Right ventricle myocardium inferior (tissue), 1 donor: ENCODE measurements at regions of chr5 and their contacts with region 1.

Region 1: DNA sequence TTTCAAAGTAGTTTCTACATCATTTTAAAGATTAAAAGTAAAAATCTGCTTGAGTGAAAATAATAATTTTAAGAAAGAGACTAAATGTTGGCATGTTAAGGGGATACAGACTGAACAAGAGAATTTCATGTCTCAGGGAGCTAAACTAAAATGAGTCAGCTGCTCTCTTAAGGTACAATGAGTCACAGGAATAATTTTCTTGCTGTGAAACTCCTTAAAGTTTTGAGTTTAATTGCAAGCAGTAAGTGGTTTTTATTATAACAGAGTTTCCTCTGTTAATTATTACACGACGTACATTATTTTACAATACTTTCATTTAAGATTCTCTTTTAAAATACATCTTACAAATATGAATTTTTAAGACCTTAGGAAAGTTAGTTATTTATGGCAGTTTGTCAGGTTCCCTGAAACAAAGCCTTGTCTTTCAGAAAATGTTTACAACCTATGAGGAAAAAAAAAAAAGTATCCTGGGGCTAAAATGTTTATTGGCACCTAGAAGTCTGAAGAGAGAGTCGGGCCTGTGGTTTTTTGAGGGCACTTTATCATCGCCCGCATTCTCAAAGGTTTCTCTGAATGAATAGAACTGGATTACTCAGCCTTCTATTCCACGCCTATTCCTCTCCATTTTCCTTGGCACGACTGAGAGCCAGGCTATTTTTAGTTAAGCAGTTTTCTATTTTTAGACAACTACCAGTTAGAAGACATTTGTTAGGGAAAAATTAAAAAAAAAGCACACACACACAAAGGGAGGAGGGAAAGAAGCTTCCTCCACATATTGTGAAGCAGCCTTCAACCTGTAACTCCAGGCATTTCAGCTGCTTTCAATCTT is 97.4 kb downstream of the MEF2C start:
- DNase-seq: no peak
- ATAC-seq: peak; percentile 91

Region 2: DNA sequence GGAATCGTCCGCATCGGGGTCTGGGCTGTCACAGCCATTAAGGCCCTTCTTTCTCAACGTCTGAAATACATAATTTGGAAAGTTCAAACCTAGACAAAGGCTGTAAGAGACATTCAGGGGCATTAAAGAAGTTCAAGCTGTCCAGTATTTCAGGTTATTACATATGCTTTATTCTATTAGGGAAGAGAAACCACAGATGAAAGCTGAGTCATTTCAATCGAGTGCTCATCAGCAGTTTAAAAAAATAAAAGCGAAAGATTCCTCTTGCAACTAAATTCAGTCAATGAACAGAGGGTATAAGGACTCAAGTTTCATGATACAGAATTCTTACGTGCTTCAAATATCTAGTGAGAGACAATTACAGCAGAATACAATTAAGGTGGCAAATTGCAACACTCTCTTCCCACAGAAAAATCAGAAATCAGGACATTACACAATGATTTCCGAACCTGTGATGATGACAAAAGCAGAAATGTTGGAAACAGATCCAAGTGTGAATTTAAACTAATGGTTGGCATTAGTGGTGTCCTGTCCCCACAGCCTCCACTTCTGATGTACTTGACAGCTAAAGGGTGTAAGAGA is 24.2 kb before region 1 on chr5:
- intact Hi-C with region 1: loop called (anchors 2 kb)
- DNase-seq: no peak
- ATAC-seq: no peak

Region 3: GRCh38 chr5:88883059-88883835 is 97.6 kb after region 1 on chr5 and contains the start of gene MEF2C:
- intact Hi-C with region 1: loop called (anchors 2 kb)
- DNase-seq: peak; percentile 86
- ATAC-seq: peak; percentile 85
- total RNA-seq, gene MEF2C: 46.7 TPM

Region 4: DNA sequence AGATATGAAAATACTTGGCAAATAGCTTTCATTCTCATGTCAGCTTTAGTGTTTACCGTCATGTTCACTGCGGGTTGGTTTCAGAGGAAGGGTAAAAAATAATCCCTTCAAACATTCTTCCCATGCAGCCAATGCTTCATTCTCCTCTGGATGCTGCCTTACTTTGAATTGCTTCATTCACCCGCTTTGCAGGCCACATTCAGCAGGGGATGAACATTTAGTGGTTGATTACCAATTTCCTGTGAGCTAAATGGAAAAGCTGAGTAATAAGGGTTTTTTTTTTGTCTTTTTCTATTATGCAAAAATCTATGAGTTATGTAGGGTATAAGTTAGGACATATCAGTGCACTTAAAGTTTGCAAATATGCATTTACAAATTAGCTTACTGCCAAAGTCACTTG is 193.6 kb after region 1 on chr5:
- intact Hi-C with region 1: no loop called
- DNase-seq: no peak
- ATAC-seq: no peak